ENCODE measurements at regions of chr10 and their contacts with region 1.

Region 1: DNA sequence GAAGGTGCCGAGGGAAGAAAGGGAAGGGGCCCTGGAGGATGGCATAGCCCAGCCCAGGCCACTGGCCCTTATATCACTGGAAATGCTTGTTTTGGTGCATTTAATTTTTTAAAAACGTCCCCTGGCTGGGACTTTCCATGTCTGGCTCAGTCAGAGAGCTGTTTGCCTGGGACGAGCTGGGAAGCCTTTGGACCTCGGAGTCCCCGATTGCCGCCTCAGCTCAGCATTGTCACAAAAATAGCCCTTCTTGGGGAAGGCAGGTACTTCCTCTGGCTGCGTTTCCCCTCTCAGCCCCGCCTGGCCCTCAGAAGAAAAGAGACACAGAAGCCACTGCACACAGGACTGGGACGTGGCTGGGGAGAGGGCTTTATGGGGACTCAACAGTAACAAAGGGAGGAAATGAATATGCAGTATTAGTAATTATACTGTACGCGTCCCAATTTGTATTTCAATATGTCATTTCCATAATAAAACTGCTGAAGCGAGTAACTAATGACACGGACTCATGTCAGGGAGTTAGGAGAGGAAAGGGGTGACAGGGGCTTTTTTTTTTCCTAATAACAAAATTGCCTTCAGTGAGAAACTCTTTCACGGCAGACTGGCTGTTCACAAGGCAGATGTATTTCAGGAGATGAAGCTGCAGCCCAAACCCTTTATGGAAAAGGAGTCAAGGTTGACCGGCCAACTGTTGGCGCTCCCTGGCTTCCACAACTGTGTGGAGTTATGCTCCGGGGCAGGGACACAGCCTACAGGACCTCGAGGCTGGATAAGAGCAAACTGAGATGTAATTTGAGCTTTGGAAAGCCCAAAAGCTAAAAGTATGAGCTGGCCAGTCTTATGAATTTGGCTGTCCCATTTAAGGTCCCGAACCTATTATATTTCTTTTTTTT is 31.0 kb upstream of the MXI1 start:
- DNase-seq: no peak
- ATAC-seq: no peak
- H3K4me3 ChIP-seq: no peak overlapping the region
- H3K27ac ChIP-seq: no peak overlapping the region
- H3K4me1 ChIP-seq: no peaks in the 10 kb centered on the region
- H3K27me3 ChIP-seq: no peaks in the 10 kb centered on the region
- CTCF ChIP-seq: no peak

Region 2: GRCh38 chr10:110279407-110279986 is 103.1 kb after region 1 on chr10:
- CTCF ChIA-PET with region 1: interaction called, 17 read pairs
- POLR2A ChIA-PET with region 1: no interaction called
- in situ Hi-C with region 1: no loop called
- intact Hi-C with region 1: no loop called
- DNase-seq: peak; percentile 52
- ATAC-seq: peak; percentile 90
- H3K4me3 ChIP-seq: no peak overlapping the region
- H3K27ac ChIP-seq: no peak overlapping the region
- H3K4me1 ChIP-seq: no peaks in the 10 kb centered on the region
- H3K27me3 ChIP-seq: no peaks in the 10 kb centered on the region
- CTCF ChIP-seq: peak; percentile 80

Region 3: DNA sequence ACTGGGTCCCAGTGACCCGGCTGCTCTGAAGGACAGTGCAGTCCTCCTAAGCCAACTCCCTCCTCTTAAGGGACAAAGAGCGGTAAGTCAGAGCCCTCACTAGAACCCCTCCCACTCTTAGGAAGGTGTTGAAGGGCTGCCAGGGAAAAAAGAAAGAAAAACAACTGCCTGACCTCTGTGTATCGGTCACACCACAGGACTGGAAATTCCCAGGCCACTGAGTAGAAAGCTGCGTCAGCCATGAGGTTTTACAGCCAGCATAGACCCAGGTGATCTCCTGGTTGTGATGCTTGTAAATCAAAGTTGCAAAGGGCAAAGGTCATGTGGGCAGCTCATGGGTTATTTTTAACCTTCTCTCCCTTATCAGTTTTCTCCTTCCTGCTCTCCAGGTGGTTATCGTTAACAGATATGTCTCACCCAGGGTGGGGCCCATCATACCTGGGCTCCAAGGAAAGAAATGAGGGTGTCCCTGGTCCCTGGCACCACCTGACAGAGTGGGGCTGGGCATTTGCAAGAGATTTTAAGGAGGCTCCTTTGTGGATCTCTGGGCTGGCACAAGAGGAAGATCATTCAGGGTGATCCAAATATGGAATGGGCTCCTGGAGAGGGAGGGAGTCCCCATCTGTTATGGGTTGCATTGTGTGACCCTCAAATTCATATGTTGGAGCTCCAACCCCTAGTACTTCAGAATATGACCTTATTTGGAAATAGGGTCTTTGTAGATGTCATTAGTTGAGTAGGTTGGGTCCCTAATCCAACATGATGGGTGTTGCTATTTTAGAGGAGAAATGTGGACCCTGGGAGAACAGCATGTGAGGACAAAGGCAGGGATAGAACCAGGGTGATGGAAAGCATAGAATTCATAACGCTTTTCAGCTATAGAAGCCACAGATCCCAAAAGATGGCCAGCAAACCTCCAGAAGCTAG is 219.6 kb after region 1 on chr10:
- CTCF ChIA-PET with region 1: no interaction called
- POLR2A ChIA-PET with region 1: no interaction called
- in situ Hi-C with region 1: no loop called
- intact Hi-C with region 1: no loop called
- DNase-seq: peak; percentile 87
- ATAC-seq: peak; percentile 79
- H3K4me3 ChIP-seq: no peak overlapping the region
- H3K27ac ChIP-seq: peak overlapping the region; percentile 77
- H3K4me1 ChIP-seq: peaks cover 49% of the 10 kb centered on the region
- H3K27me3 ChIP-seq: no peaks in the 10 kb centered on the region
- CTCF ChIP-seq: no peak

Region 4: DNA sequence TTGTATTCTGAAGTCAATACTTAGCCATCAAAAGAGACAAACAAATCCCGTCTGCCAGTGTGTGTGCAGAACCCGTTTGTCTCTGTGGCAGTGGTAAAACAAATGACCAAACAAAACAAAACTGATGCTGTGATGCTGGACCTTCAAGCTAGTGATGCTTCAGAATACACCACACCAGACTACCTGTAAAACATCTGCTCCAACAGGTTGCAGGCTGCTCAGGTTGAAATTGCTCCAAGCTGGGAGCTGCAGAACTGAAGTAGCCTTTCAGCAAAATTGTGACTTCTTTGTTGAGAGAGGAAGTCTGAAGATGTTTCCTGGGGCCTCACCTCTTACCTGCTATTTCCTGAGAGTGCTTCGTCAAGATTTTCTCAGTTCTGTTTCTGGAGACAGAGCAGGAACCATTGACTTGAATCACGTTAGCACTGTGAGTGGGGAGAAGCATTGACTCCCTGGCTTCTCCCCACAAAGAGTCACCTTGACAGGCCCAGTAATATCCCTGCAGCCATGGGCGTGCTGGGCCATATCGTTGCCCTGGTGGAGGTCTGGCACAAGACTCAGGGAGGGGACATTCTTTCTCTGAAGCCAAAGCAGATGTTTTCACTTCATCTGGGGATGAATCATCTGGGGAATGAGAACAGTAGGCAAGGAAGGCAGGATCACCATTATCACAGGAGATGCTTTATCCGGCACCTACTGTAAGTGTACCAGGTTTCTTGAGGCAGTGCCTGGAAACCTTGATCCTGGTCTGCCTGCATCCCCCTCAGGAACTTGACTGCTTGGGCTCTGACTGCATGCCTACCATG is 547.9 kb after region 1 on chr10:
- CTCF ChIA-PET with region 1: no interaction called
- POLR2A ChIA-PET with region 1: interaction called, 10 read pairs
- in situ Hi-C with region 1: no loop called
- intact Hi-C with region 1: no loop called
- DNase-seq: no peak
- ATAC-seq: no peak
- H3K4me3 ChIP-seq: no peak overlapping the region
- H3K27ac ChIP-seq: no peak overlapping the region
- H3K4me1 ChIP-seq: no peaks in the 10 kb centered on the region
- H3K27me3 ChIP-seq: peaks cover 3% of the 10 kb centered on the region; the same call in 1 of the 2 replicates
- CTCF ChIP-seq: no peak

Measured in Panc1 (cell line).